ENCODE measurements at regions of chr2 and their contacts with region 1.

Region 1: GRCh38 chr2:66429071-66429477 is 5.9 kb upstream of the MEIS1 start:
- DNase-seq: peak; percentile 87
- H3K4me3 ChIP-seq: no peak overlapping the region
- H3K27ac ChIP-seq: peak overlapping the region; percentile 77
- H3K4me1 ChIP-seq: peaks cover 63% of the 10 kb centered on the region
- H3K27me3 ChIP-seq: no peaks in the 10 kb centered on the region
- CTCF ChIP-seq: peak; percentile 94

Region 2: DNA sequence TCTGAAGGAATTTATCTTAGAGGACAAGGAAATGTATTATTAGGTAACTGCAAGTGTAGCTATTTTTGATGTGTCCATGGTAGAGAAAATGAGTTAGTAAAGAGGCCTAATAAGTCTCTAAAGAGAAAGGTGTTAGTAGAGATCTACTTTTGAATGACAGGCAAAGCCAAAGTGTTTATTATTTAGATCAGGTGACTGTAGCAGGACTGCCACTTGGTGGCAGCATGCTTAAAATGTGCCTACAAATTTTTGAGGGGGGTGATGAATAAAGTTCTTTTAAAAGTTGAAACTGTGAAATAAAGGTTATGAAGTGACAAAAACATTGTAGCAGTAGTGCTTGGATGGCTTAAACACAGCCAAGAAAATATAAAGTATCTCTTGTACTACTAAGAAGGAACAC is 415.6 kb before region 1 on chr2:
- CTCF ChIA-PET with region 1: no interaction called
- POLR2A ChIA-PET with region 1: no interaction called
- intact Hi-C with region 1: loop called (anchors 5 kb)
- DNase-seq: peak; percentile 55
- H3K4me3 ChIP-seq: no peak overlapping the region
- H3K27ac ChIP-seq: no peak overlapping the region
- H3K4me1 ChIP-seq: peaks cover 7% of the 10 kb centered on the region
- H3K27me3 ChIP-seq: no peaks in the 10 kb centered on the region
- CTCF ChIP-seq: peak; percentile 73

Region 3: GRCh38 chr2:67002618-67003371 is 573.7 kb after region 1 on chr2:
- CTCF ChIA-PET with region 1: no interaction called
- POLR2A ChIA-PET with region 1: no interaction called
- intact Hi-C with region 1: no loop called
- DNase-seq: no peak
- H3K4me3 ChIP-seq: no peak overlapping the region
- H3K27ac ChIP-seq: no peak overlapping the region
- H3K4me1 ChIP-seq: peaks cover 10% of the 10 kb centered on the region
- H3K27me3 ChIP-seq: no peaks in the 10 kb centered on the region
- CTCF ChIP-seq: peak; percentile 28; the same call in 1 of the 2 replicates

Region 4: DNA sequence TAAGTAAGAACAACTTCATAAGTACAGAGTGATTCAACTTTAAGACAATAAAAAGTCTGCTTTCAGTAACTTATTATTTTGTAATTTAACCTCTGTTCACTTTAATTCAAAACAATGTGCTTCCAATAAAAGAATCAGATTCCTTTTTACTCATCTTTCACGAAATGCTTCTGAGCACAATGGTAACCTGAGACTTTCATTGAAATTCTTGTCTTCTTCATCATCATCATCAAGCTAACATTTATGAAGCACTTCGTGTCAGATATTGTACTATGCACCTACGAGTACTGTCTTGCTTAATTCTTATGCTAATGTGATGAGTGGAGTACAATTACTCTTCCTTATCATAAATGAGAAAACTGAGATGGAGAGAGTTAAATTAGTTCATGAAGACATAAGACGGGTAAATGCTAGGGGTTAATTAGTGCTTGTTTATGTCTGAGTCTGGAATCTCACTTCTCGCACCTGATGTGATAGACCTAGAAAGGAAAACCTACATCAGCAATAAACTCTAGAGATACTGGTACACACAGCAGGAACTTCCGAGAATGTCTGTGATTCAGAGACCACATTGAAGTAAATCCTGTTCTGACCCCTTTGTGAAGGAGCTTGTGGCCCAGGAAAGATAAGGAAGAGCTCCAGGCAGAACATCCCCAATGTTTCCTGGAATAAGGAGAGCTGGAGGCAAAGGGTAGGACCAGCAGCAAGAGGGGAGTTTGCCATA is 740.5 kb after region 1 on chr2:
- CTCF ChIA-PET with region 1: no interaction called
- POLR2A ChIA-PET with region 1: no interaction called
- intact Hi-C with region 1: no loop called
- DNase-seq: no peak
- H3K4me3 ChIP-seq: no peak overlapping the region
- H3K27ac ChIP-seq: no peak overlapping the region
- H3K4me1 ChIP-seq: no peaks in the 10 kb centered on the region
- H3K27me3 ChIP-seq: no peaks in the 10 kb centered on the region
- CTCF ChIP-seq: no peak